ENCODE measurements at regions of chr16 and their contacts with region 1.

Region 1: DNA sequence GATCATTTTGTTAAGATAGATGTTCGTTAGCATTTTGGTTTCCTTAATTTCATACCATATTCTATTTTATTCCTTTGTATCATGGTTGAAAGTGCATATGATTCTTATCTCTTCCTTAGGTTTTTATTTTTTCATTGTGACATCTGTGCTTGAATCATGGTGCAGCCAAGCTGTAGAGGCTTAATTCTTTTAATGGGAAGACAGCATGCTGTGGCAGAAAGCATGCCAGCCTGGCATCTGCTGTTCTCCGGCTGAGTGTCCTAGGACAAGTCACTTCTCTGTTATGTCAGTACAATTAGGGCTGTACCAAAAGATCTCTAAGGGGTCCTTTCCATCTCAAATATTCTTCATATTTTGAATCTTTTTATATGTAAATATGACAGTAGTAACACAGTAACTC is 68.5 kb upstream of the PMFBP1 start:
- DNase-seq: no peak
- ATAC-seq: no peak
- H3K4me3 ChIP-seq: no peak overlapping the region
- H3K4me3 Mint-ChIP-seq: no peak overlapping the region
- H3K27ac ChIP-seq: no peak overlapping the region
- H3K27ac Mint-ChIP-seq: no peak overlapping the region
- H3K4me1 ChIP-seq: no peaks in the 10 kb centered on the region
- H3K4me1 Mint-ChIP-seq: peaks cover 0 to 1% (median 0%) of the 10 kb centered on the region in 3 donors
- H3K27me3 ChIP-seq: no peaks in the 10 kb centered on the region
- H3K27me3 Mint-ChIP-seq: peaks cover 0 to 4% of the 10 kb centered on the region in 2 donors

Region 2: GRCh38 chr16:70653809-70654771 is 1586.4 kb before region 1 on chr16:
- CTCF ChIA-PET with region 1: no interaction called
- POLR2A ChIA-PET with region 1: no interaction called
- DNase-seq: peak; percentile 43 to 87 (median 71)
- ATAC-seq: peak; percentile 75 to 82 (median 80)
- H3K4me3 ChIP-seq: no peak overlapping the region
- H3K4me3 Mint-ChIP-seq: peak overlapping the region in 2 of 3 donors; percentile 29
- H3K27ac ChIP-seq: no peak overlapping the region
- H3K27ac Mint-ChIP-seq: no peak overlapping the region
- H3K4me1 ChIP-seq: peaks cover 0 to 5% of the 10 kb centered on the region in 2 experiments
- H3K4me1 Mint-ChIP-seq: peaks cover 3 to 6% (median 4%) of the 10 kb centered on the region in 3 donors
- H3K27me3 ChIP-seq: peaks cover 0 to 8% of the 10 kb centered on the region in 2 experiments
- H3K27me3 Mint-ChIP-seq: no peaks in the 10 kb centered on the region

Region 3: GRCh38 chr16:72191551-72191950 is 48.9 kb before region 1 on chr16:
- CTCF ChIA-PET with region 1: interaction called in 1 of 2 experiments, 11 read pairs
- POLR2A ChIA-PET with region 1: no interaction called
- DNase-seq: no peak
- ATAC-seq: no peak
- H3K4me3 ChIP-seq: no peak overlapping the region
- H3K4me3 Mint-ChIP-seq: no peak overlapping the region
- H3K27ac ChIP-seq: no peak overlapping the region
- H3K27ac Mint-ChIP-seq: no peak overlapping the region
- H3K4me1 ChIP-seq: no peaks in the 10 kb centered on the region
- H3K4me1 Mint-ChIP-seq: no peaks in the 10 kb centered on the region
- H3K27me3 ChIP-seq: no peaks in the 10 kb centered on the region
- H3K27me3 Mint-ChIP-seq: no peaks in the 10 kb centered on the region

Measured in T-cell (primary cell).